GM18951 (cell line): ENCODE measurements at regions of chr2 and their contacts with region 1.

Region 1: GRCh38 chr2:96514521-96514920 is 9.4 kb upstream of the NEURL3 start:
- POLR2A ChIP-seq: no peak

Region 2: GRCh38 chr2:96305091-96305978 is 209.2 kb before region 1 on chr2 and contains the start of gene SNRNP200:
- in situ Hi-C with region 1: no loop called
- POLR2A ChIP-seq: peak; percentile 92

Region 3: DNA sequence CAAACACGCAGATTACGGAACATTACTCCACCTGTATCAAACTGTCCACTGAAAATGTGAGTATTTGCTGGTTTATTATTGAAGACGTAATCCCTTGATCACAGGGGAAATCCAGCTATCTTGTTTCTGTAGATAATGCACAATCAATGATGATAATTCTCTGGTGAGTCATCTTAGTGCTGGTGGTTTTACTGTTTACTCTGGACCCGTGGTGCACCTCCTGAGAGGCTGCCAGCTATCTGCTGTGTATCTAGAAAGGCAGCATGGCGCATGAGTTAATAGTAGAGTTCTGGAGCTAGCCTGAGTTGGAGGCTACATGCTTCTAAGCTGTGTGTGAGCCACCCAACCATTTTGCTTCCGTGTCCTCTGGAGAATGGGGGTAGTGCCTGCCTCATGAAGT is 172.4 kb before region 1 on chr2:
- in situ Hi-C with region 1: no loop called
- POLR2A ChIP-seq: no peak

Region 4: GRCh38 chr2:96407041-96407918 is 107.2 kb before region 1 on chr2:
- in situ Hi-C with region 1: loop called (anchors 10 kb)
- POLR2A ChIP-seq: no peak